ENCODE measurements at regions of chr10 and their contacts with region 1.

Region 1: GRCh38 chr10:16817125-16818019 is at the start of gene RSU1:
- DNase-seq: peak; percentile 98
- CTCF ChIP-seq: no peak

Region 2: DNA sequence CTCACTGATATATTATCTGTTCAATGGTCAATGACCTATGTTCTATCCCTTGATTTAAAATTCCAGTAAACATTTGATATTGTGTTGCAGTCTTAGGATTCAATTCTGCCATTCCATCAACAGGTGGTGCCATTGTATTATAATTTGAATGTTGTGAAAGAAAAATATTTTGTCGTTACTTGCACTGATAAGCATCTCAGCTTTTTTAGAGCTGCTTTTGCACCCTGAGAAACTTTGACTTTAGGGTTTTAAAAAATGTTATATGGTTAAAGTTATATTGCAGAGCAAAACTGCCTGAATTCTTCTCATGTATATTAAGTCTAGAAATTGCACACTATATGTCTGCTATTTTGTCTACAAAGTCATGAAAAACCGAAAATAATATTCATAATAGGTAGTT is 938.3 kb before region 1 on chr10:
- in situ Hi-C with region 1: loop called (anchors 25 kb)
- DNase-seq: peak; percentile 53
- CTCF ChIP-seq: peak; percentile 55

Region 3: DNA sequence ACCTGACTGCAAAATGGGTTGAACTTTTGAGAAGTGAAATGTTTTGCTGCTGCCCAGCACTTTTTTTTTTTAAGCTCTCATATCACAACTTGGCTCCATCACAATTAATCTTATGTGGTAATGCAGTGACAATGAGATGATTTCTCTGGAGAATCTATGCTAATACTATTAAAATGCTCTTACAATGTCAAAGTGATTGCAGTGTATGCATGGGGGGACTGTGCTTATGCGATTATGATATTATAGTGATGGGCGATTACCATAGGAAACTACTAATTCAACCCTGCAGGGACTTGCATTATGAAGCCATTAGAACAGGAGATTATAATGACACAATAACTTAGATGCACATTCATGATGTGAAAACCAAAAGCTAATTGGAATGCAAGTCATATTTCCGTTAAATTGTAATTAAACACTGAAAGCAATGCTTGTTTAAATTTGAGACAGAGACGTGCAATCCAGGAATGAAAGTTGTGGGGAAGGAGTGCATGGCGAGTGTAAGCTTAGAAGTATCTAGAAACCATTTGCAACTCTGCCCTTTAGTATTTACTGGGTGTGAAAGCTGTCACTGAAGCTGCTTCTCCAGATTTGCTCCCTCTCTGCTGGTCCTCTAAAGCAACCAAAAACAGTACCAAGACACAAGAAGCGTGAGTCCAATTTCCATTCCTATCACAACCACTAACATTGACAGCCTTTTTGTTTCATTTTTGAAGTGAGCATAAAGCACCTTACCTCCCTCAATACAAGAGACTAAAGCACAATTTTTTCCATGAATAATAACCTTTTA is 359.0 kb before region 1 on chr10:
- in situ Hi-C with region 1: no loop called
- DNase-seq: no peak
- CTCF ChIP-seq: no peak

Region 4: GRCh38 chr10:16995867-16996529 is 178.6 kb after region 1 on chr10:
- in situ Hi-C with region 1: no loop called
- DNase-seq: no peak
- CTCF ChIP-seq: no peak

Measured in GM13976 (cell line).